Activated B cell treated with CpG ODN at 0.5 μM for 24 hours (primary cell): ENCODE measurements at regions of chr1 and their contacts with region 1.

Region 1: DNA sequence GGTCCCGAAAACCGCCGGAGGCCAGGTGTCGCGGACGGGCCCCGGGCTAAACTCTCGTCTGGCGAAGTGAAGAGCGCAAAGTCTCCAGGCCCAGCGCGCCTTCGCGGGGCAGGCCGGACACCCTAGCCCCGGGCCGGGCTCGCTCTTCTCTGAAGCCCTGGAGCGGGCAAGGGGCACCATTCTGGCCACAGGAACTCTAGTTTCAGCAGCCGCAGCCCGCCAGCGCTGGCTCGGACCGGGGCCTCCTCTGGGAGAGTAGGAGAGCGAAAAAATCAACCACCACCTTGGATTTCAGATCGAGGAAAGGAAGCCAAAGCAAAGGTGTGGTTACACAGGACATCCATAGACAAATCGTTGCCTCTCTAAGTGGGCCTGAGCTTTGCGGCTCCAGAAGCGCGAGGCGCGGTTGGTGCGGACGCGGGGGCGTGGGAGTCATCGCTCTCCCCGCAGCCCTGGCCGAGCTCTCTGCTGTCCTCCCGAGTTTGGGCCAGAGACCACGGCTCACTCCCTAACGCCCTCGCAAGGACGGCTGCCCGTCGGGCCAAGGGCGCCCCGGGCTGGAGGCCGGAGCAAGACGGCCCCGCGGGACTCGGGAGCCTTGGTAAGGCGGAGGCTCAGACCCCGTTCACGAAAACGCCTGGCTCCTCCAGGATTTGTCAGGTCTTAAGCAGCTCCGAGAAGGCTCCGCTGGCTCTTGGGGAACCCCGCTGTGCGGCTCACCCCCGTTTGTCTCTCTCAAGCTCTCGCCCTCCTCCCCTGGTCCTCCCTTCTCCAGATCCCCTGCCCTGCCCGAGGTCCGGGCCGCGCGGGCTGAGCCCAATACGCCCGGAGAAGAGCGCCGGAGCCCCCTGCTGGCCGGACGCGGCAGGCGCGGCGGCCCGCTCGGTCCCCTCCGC is 132.9 kb upstream of the DPYD start:
- DNase-seq: peak; percentile 53
- ATAC-seq: peak; percentile 92
- H3K4me3 Mint-ChIP-seq: peak overlapping the region; percentile 67
- H3K27ac Mint-ChIP-seq: no peak overlapping the region
- H3K4me1 Mint-ChIP-seq: peaks cover 13% of the 10 kb centered on the region
- H3K27me3 Mint-ChIP-seq: peaks cover 54% of the 10 kb centered on the region
- CTCF ChIP-seq: peak; percentile 77

Region 2: DNA sequence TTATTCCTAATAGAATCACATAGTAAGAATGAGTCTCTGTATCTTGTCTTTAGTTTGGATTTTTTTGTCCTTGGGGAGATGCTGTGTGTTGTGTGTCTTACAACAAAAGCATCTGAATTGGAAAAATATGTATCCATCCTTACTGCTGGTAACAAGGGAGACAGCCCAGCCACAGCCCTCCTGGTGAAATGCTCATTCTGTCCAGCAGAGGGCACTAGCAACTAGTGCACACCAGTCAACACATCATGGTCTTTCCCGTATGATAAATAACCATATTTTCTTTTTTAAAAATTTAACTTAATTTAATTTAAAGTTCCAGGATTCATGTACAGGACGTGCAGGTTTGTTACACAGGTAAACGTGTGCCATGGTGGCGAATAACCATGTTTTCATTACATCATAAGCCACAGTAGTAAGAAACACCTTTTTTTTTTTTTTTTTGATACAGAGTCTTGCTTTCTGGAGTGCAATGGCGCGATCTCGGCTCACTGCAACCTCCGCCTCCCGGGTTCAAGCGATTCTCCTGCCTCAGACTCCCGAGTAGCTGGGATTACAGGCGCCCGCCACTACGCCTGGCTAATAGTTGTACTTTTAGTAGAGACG is 1087.1 kb before region 1 on chr1:
- CTCF ChIA-PET with region 1: interaction called, 20 read pairs
- POLR2A ChIA-PET with region 1: no interaction called
- intact Hi-C with region 1: loop called (anchors 1 kb)
- DNase-seq: peak; percentile 44
- ATAC-seq: peak; percentile 52
- H3K4me3 Mint-ChIP-seq: no peak overlapping the region
- H3K27ac Mint-ChIP-seq: no peak overlapping the region
- H3K4me1 Mint-ChIP-seq: no peaks in the 10 kb centered on the region
- H3K27me3 Mint-ChIP-seq: peaks cover 5% of the 10 kb centered on the region
- CTCF ChIP-seq: peak; percentile 52

Region 3: DNA sequence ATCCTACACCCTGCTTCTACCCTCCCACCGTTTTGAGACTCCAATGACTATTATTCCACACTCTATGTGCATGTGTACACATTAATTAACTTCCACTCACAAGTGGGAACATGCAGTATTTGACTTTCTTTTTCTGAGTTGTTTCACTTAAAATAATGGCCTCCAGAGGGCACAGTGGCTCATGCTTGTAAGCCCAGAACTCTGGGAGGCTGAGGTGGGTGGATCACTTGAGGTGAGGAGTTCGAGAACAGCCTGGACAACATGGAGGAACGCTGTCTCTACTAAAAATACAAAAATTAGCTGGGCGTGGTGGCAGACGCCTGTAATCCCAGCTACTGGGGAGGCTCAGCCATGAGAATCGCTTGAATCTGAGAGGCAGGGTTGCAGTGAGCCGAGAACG is 867.3 kb before region 1 on chr1:
- CTCF ChIA-PET with region 1: no interaction called
- POLR2A ChIA-PET with region 1: no interaction called
- intact Hi-C with region 1: loop called (anchors 1 kb)
- DNase-seq: no peak
- ATAC-seq: no peak
- H3K4me3 Mint-ChIP-seq: no peak overlapping the region
- H3K27ac Mint-ChIP-seq: no peak overlapping the region
- H3K4me1 Mint-ChIP-seq: peaks cover 8% of the 10 kb centered on the region
- H3K27me3 Mint-ChIP-seq: no peaks in the 10 kb centered on the region
- CTCF ChIP-seq: no peak

Region 4: GRCh38 chr1:97668945-97669344 is 384.8 kb before region 1 on chr1:
- CTCF ChIA-PET with region 1: interaction called, 3 read pairs
- POLR2A ChIA-PET with region 1: no interaction called
- intact Hi-C with region 1: loop called (anchors 1 kb)
- DNase-seq: no peak
- ATAC-seq: no peak
- H3K4me3 Mint-ChIP-seq: no peak overlapping the region
- H3K27ac Mint-ChIP-seq: no peak overlapping the region
- H3K4me1 Mint-ChIP-seq: no peaks in the 10 kb centered on the region
- H3K27me3 Mint-ChIP-seq: no peaks in the 10 kb centered on the region
- CTCF ChIP-seq: no peak

Region 5: DNA sequence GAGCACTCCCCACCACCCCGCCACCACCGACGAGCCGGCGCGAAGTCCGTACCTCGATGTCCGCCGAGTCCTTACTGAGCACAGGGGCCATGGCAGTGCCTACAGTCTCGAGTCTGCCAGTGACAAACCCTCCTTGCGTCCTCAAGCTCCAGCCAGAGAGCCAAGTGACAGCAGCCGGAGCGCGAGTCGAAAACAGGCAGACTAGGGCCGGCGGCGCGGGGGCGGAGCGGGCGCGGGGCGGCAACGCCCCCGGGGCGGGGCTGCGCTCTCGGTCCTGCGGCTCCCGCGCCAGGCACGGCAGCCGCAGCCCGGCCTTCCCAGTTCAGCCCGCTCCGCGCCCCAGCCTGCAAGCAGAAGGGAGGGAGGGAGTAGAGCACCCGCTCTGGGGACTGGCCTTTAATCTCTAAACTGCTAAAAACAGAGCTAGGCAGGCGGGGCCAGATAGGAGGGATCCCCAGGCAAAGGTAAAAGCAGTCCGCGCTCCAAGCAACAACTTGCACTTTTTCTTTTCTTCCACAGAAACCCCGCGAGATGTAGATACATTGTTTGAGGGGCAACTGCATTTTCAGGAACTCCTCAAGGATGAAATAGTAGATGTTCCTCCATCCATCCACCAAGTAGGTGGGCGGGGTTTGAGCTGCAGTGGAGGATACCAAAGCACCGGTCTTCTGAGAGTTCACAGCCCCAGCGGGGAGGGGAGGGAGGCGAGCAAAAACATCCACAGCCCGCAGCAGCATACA is 132.7 kb before region 1 on chr1 and contains the start of gene DPYD:
- CTCF ChIA-PET with region 1: no interaction called
- POLR2A ChIA-PET with region 1: no interaction called
- intact Hi-C with region 1: loop called (anchors 5 kb)
- DNase-seq: peak; percentile 80
- ATAC-seq: peak; percentile 89
- H3K4me3 Mint-ChIP-seq: peak within 1 kb of the TSS; percentile 93
- H3K27ac Mint-ChIP-seq: peak within 1 kb of the TSS; percentile 89
- H3K4me1 Mint-ChIP-seq: peaks cover 22% of the 10 kb centered on the region
- H3K27me3 Mint-ChIP-seq: no peaks in the 10 kb centered on the region
- CTCF ChIP-seq: no peak
- total RNA-seq, gene DPYD: 10.3 and 12.6 TPM in 2 replicates

Region 6: DNA sequence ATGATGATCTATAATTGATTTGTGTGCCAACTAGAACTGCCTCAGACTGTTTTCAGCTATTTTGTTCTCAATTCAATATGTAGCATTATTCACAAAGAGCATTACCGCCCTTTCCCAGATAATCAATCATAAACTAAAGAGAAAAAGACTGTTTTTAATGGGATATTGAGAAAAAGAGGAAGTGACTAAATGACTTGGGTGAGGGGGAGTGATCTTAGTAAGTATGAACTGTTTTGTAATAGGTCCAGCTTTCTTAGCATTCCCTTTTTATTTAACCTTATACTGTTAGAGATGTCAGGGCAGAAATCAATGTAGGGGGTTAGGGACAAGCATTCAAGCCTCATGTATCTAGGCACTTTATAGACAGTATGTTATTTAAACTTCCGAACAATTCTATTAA is 24.9 kb after region 1 on chr1:
- CTCF ChIA-PET with region 1: no interaction called
- POLR2A ChIA-PET with region 1: no interaction called
- intact Hi-C with region 1: no loop called
- DNase-seq: no peak
- ATAC-seq: no peak
- H3K4me3 Mint-ChIP-seq: no peak overlapping the region
- H3K27ac Mint-ChIP-seq: no peak overlapping the region
- H3K4me1 Mint-ChIP-seq: no peaks in the 10 kb centered on the region
- H3K27me3 Mint-ChIP-seq: no peaks in the 10 kb centered on the region
- CTCF ChIP-seq: no peak